Transverse colon (tissue), 4 donors: ENCODE measurements at regions of chr18 and their contacts with region 1.

Region 1: DNA sequence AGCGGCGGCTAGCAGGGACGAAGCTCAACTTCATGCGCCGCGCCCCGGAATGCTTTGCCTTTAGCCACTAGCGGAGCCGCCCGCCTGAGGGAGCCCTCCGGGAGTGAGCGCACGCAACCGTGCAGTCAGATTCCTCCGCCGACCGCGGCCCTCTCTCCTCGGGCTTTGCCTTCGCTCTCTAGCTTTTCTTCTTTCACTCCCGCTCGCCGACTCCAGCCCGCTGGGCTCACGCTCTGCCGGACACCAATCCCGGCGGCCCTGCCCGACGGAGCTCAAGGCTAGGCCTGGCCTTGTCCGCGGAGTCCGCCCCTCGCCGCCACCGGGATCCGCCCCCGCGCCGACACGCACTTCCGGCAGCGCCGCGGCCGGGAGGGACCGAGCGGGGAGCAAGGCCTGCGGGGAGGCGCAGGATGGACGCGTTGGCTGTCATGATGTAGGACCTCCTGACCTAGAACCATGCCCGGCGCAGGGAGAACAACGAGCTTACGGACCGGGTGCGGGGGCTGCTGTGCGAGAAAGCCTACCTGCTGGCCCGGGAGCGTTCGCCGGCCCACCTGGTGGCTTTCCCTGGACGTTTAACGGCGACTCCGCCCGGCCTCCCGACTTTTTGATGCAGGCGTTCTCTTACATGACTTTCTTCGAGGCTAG is 40.8 kb upstream of the AKAIN1 start:
- DNase-seq: peak; percentile 89
- H3K4me3 ChIP-seq: peak overlapping the region; percentile 67 to 82 (median 78)
- H3K27ac ChIP-seq: peak overlapping the region; percentile 95 to 99 (median 97)
- H3K4me1 ChIP-seq: peaks cover 12 to 37% (median 23%) of the 10 kb centered on the region in 4 donors
- H3K27me3 ChIP-seq: no peaks in the 10 kb centered on the region
- CTCF ChIP-seq: peak in 4 of 5 experiments; percentile 38 to 62 (median 46)
- EP300 ChIP-seq: no peak
- POLR2A ChIP-seq: peak; percentile 79

Region 2: DNA sequence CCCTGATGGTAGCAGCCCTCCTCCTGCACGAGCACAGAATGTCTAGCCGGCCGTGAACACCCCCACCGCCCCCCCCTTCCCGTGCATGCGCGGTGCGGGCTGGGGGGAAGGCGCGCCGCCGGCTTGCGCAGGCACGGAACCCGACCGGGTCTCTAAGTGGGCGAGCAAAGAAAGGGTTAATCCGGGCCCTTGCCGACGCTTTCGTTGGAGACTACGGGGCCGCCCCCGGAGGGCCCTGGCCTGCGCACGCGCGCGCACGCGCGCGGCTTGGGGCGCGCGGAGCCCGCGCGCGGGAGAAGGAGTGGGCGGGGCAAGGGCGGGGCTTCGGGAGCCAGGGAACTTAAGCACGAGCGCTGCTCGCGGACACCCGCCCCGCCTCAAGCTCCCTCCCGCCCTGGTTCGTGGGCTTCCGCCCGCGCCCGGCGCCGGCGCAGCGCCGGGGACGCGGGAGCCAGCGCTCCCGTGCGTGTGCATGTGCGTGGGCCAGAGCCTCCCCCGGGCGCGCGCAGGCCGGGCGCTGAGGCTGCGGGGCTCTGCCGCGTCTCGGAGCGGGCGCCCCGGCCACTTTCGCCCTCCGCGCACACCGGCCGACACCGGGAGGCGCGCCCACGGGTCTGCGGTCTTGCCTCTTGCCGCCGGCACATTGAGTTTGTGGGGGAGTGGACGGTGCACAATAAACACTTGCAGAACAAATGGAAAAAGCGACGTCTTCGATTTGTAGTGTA is 58.3 kb after region 1 on chr18:
- in situ Hi-C with region 1: loop called in 1 of 4 experiments (anchors 10 kb)
- intact Hi-C with region 1: loop called (anchors 10 kb)
- DNase-seq: peak; percentile 98
- H3K4me3 ChIP-seq: peak overlapping the region; percentile 61 to 91 (median 87)
- H3K27ac ChIP-seq: peak overlapping the region; percentile 93 to 100 (median 98)
- H3K4me1 ChIP-seq: peaks cover 0 to 24% (median 11%) of the 10 kb centered on the region in 4 donors
- H3K27me3 ChIP-seq: peaks cover 11% of the 10 kb centered on the region
- CTCF ChIP-seq: no peak
- EP300 ChIP-seq: no peak
- POLR2A ChIP-seq: no peak